Activated T-helper 2 cell treated with anti-CD3 and anti-CD28 coated beads, Interferon-gamma antibody, Interleukin-2, Interleukin-4, amounts not matched to agents 10 μg/mL and 5 μg/mL and 100 μg/mL, durations not matched to agents 14 hours and 24 hours and 36 hours (primary cell): ENCODE measurements at regions of chr2 and their contacts with region 1.

Region 1: DNA sequence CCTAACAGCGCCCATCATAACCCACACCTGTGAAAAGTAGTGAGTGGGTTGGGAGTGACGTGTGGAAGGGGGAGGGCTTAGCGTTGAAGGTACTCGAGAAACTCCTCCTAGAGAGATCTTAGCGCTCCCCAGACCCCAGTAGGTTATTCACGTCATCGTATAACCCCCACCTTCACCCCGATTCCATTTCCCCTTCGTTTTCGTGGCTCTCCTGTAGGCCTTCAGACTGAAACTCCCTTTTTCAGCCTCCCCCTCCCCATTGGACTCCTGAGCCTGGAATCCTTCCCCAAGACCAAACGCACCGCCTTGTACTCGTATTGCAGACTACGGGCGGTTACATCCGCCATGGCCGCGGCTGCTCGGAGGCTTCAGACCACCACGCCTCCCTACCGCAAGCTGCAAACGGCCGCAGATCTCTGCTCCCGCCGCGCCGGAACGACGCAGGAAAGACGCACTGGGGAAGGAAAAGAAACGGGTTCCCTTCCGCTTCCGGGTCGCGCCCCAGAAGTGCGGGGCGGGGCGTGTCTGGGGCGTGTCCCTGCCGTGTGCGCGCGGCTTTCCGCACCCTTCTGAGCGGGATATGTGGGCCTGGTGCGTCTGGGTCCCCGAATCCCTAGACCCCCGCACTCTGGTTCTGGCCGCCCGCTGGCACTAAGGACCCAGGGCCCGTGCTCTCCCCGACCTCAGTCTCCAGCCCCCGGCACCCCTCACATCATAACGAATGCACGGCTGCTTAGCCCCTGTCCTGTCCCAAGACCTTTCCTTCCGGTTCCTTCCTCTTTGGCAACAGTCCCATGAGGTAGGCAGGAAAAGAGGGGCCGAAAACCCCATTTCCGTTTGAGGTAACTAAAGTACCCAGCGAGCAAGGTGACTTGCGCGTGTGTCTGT is at the start of gene SNRNP200:
- DNase-seq: peak; percentile 88
- H3K4me3 Mint-ChIP-seq: peak within 1 kb of the TSS; percentile 95
- H3K27ac Mint-ChIP-seq: peak within 1 kb of the TSS; percentile 94
- H3K4me1 Mint-ChIP-seq: peaks cover 45% of the 10 kb centered on the region
- H3K27me3 Mint-ChIP-seq: no peaks in the 10 kb centered on the region
- total RNA-seq, gene SNRNP200: 191 TPM in 2 replicates

Region 2: GRCh38 chr2:96320728-96321622 is 15.6 kb after region 1 on chr2:
- intact Hi-C with region 1: loop called (anchors 1 kb)
- DNase-seq: no peak
- H3K4me3 Mint-ChIP-seq: peak overlapping the region; percentile 88
- H3K27ac Mint-ChIP-seq: peak overlapping the region; percentile 86
- H3K4me1 Mint-ChIP-seq: peaks cover 54% of the 10 kb centered on the region
- H3K27me3 Mint-ChIP-seq: no peaks in the 10 kb centered on the region

Region 3: DNA sequence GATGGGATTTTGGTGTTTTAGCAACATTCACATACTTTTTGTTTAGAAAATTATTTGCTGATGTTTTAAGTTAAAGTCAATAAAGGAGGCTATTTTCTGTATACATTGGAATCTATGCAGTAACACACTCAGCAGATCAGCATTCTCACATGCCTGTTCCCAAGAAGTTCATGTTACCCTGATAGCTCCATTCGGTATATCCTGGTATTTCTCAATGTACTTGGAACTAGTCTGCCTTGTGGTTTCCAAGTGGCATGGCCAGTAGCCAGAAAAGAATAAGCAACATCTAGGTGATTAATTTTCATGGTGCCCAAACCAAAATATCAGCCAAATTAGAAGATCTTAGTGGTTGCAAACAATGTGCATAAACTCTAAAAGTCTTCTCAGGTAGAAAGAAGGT is 25.1 kb after region 1 on chr2:
- intact Hi-C with region 1: loop called (anchors 1 kb)
- DNase-seq: no peak
- H3K4me3 Mint-ChIP-seq: no peak overlapping the region
- H3K27ac Mint-ChIP-seq: no peak overlapping the region
- H3K4me1 Mint-ChIP-seq: peaks cover 44% of the 10 kb centered on the region
- H3K27me3 Mint-ChIP-seq: no peaks in the 10 kb centered on the region